ENCODE measurements at regions of chr14 and their contacts with region 1.

Region 1: DNA sequence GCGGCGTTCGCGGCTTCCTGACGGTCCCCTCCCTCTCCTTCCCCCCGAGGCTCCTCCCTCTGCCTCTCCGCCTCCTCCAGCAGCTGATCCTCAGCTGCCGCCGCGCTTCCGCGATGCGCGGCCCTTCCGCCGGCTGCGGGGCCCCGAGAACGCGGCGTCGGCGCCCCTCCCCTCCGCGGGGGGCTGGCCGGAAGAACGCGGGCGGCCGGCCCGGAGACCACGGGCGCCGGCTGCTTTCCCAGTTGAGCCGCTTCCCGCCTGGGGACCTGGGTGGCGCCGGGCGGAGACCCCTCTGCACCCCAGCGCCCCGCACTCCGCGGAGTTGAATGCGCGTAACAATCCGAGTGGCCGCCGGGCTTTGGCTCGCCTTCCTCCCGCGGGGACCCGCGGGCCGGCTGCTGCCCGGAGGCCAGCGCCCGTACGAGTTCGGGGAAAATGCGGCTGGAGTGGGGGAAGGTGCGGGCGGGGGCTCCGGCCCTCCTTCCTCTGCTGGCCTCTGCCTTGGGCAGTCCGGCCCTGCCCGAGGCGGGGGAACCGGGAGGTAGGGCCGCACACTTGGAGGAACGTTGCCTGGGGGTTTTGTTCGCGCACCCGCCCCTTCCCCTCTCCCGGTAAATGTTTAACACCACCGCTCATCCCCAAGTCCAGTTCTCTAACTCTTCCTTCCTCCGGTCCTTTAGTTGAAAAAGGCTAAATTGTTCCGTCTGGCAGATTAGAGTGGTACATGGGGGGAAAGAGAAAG is 383 bp upstream of the DCAF5 start:
- DNase-seq: peak; percentile 97
- ATAC-seq: peak; percentile 95

Region 2: GRCh38 chr14:68926236-68926635 is 227.1 kb before region 1 on chr14:
- intact Hi-C with region 1: no loop called
- DNase-seq: peak; percentile 20
- ATAC-seq: no peak

Region 3: DNA sequence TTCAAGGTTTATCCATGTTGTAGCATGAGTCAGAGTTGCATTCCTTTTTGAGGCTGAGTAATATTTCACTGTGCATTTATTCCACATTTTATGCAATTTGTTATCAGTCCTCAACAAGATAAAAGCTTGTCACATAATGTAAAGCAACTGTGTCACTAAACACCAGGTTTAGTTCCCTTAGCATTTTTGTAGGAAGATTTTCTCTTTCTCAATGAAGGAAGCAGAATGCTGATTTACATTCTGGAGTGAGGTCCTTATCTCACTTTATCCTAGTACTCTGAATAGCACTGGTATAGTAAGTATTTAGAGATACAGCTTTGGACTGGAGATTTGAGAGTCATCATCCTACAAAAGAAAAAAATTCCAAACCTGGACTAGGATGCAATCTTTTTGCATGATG is 28.2 kb after region 1 on chr14:
- intact Hi-C with region 1: no loop called
- DNase-seq: no peak
- ATAC-seq: no peak

Region 4: DNA sequence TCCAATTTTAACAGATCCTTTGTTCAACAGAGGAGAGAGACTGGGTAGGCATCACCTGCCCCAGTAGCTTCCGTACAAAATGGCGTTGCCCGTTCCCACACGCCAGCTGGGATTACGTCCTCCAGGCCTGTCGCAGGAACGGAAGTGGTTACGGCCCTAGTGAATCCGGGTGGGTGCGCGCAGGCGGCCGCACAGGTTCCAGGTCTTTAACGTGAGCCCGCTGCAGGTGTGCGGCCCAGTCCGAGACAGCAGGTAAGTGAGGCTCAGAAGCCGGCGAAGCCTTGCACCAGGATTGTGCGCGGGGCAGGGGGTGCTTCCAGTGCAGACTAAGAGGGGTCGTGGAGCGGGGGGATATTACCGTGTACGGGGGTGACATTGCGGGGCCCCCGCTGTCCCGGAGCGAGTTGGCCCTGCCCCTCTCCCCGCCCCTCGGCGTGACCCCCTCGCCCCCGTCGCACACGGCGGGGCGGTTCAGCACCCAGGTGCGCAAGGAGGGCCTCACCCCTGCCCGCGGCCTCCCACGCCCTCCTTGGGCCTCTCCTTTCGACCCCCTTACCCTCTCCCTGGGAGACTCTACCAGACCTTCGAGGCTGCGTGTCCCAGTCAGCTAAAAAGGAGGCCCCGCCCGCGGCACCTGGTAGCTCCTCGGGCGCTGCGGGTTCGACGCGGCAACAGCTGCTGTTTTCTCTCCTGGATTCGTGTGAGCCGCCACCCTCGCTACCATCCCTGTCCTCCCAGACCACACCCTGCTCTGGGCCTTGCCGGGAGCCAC is 38.2 kb after region 1 on chr14 and contains the start of gene EXD2:
- intact Hi-C with region 1: loop called (anchors 1 kb)
- DNase-seq: peak; percentile 90
- ATAC-seq: peak; percentile 98
- total RNA-seq, gene EXD2: 17.0 TPM

Region 5: GRCh38 chr14:69226178-69226577 is 72.9 kb after region 1 on chr14:
- intact Hi-C with region 1: loop called (anchors 5 kb)
- DNase-seq: no peak
- ATAC-seq: peak; percentile 66

Region 6: DNA sequence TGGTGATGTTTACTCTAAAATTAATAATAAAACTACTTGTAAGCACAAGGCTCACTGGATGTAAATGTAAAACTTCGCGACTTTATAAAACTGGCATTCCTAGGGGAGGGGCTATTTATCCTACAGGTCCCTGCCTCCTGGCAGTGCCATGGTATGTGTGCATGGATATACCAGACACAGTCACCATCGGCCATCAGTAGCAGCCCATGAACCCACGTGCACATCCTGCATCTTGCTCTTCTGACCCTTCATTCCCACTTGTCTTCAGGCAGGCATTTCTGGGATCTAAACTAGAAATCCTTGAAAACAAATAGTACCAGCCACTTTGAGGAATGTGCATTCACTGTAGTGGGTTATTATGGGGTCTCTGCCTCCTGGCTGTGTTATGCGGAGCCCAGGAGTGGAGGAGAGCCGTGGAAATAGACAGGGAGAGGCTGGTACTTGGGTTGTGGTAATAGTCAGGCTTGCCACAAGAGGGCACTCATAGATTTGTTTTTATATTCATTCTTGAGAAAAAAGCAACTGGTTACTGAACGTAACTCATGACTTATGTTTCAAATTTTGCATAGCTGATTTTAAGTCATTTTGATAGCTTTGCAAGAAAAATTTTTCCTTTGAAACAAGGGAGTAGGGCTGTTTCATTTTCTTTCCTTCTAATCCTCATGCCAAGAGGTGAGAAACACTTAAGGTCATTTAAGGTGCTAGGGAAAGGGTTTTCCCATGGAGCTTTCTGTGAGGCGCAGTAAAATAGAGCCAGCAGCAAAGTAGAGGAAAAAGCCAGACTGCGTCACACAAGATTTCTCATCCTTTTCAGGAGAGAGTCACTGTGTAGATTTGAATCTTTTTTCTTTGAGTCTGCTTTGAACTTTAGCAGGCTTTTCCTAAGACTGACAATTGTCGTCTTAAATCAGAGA is 89.3 kb after region 1 on chr14:
- intact Hi-C with region 1: loop called (anchors 5 kb)
- DNase-seq: no peak
- ATAC-seq: peak; percentile 61

Region 7: DNA sequence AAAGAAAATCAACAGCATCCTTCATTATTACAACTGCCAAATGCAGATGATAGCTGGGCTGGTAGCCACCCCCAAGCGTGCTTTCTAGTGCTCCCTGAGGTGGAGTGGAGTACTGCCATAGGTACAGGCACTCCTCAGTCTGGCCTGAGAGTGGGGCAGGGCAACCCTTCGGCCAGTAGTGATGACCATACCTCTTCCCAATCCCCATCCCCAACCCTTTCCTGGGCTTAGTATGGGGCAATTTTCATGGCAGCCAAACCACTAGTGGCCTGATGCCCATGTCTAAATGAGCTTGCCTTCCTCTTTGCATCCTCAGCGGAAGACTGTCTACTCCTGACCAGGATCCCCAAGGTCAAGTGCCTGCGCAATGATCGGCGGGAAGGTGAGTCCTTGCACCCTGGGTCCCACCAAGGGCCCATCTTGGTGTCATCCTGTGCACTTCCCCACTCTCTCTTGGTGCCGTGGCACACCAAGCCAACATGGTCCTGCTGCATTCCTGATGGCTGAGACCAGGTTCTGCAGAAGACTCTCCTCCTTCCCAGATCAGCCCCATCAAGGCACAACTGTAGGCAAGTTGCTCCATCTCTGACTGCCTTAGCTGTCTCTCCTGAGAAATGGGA is 172.5 kb after region 1 on chr14:
- intact Hi-C with region 1: no loop called
- DNase-seq: no peak
- ATAC-seq: no peak